GM10248 (cell line): ENCODE measurements at regions of chr17 and their contacts with region 1.

Region 1: DNA sequence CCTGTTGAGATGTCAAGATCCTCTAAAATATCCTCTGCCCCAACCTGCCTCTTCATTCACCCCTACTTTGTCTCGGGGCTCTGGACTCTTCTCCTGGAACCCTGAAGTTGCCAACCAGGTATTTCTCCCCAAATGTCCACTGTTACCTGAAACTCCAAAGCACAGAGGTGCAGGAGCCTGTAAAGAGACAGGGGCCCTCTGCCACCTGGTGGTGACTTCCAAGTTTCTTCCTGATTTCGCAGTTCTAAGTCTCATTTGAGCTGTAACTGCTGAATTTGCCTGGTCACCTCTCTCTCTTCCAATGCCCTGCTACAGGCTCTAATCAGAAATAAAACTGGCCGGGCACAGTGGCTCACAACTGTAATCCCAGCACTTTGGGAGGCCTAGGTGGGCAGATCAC is 77.1 kb upstream of the RCVRN start:
- DNase-seq: peak; percentile 54
- CTCF ChIP-seq: peak; percentile 26

Region 2: GRCh38 chr17:9968902-9969617 is 13.1 kb before region 1 on chr17:
- CTCF ChIA-PET with region 1: interaction called, 20 read pairs
- POLR2A ChIA-PET with region 1: no interaction called
- DNase-seq: no peak
- CTCF ChIP-seq: no peak

Region 3: DNA sequence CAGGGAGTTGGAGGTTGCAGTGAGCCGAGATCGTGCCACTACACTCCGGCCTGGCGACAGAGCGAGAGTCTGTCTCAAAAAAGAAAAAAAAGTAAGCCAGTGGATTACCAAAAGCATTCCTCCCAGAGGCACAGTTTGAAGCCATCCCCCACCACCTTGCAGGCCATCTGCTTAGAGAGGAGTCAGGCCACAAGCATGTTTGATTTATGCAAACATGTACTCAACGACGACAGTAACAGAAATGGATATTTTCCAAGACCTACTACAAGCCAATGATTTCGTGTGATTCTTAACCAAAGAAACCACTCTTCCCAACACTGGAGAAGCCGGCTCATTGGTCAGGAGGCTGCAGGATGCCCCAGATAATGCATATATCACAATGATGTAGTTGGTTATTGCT is 355.8 kb after region 1 on chr17:
- CTCF ChIA-PET with region 1: no interaction called
- POLR2A ChIA-PET with region 1: no interaction called
- DNase-seq: no peak
- CTCF ChIP-seq: no peak